ENCODE measurements at regions of chr5 and their contacts with region 1.

Region 1: GRCh38 chr5:40437452-40437861 is 242.3 kb upstream of the PTGER4 start:
- DNase-seq: no peak
- H3K4me3 Mint-ChIP-seq: peak overlapping the region; percentile 13
- H3K27ac Mint-ChIP-seq: peak overlapping the region; percentile 71
- H3K4me1 Mint-ChIP-seq: peaks cover 84% of the 10 kb centered on the region
- H3K27me3 Mint-ChIP-seq: no peaks in the 10 kb centered on the region

Region 2: GRCh38 chr5:40333459-40334244 is 103.8 kb before region 1 on chr5:
- intact Hi-C with region 1: loop called (anchors 1 kb)
- DNase-seq: no peak
- H3K4me3 Mint-ChIP-seq: no peak overlapping the region
- H3K27ac Mint-ChIP-seq: peak overlapping the region; percentile 27
- H3K4me1 Mint-ChIP-seq: peaks cover 43% of the 10 kb centered on the region
- H3K27me3 Mint-ChIP-seq: no peaks in the 10 kb centered on the region

Region 3: GRCh38 chr5:40480392-40480791 is 42.9 kb after region 1 on chr5:
- intact Hi-C with region 1: loop called (anchors 1 kb)
- DNase-seq: no peak
- H3K4me3 Mint-ChIP-seq: no peak overlapping the region
- H3K27ac Mint-ChIP-seq: no peak overlapping the region
- H3K4me1 Mint-ChIP-seq: peaks cover 40% of the 10 kb centered on the region
- H3K27me3 Mint-ChIP-seq: no peaks in the 10 kb centered on the region

Measured in activated T-helper 1 cell treated with anti-CD3 and anti-CD28 coated beads, Interleukin-12 subunit alpha, Interleukin-12 subunit beta, Interleukin-2, Interleukin-4 antibody, amounts not matched to agents 30 ng/mL and 10 ng/mL and 1 ng/mL, durations not matched to agents 14 hours and 24 hours and 36 hours (primary cell).